ENCODE measurements at regions of chr1 and their contacts with region 1.

Region 1: DNA sequence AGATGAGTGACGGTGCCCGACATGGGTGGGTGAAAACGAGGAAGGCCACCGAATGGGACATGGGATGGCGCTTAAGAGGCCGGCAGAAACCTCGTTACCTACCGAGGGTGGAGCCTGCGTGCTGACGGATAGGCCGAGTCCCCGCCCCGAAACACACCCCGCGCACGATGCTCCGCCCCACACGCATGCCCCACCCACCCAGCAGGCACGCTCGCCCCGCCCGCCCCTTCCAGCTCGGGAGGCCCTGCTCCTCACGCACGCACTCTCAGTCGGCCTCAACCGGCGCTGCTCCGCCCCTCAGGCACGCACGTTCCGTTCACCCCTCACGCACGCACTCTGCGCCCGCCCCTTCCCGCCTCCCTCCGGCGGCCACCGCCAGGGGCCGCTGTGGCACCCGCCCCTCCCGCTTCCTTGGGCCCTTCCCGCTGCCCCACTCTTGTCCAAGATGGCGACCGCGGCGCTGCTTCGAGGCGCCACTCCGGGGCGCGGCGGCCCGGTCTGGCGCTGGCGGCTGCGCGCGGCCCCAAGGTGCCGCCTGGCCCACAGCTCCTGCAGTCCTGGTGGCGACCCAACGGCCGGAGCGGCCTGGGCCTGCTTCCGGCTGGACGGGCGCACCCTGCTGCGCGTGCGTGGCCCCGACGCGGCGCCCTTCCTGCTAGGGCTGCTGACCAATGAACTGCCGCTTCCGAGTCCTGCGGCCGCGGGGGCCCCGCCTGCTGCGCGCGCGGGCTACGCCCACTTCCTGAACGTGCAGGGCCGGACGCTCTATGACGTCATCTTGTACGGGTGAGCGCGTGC is at the start of gene IBA57:
- DNase-seq: peak; percentile 100
- ATAC-seq: peak; percentile 85
- H3K4me3 Mint-ChIP-seq: peak within 1 kb of the TSS; percentile 90
- H3K27ac Mint-ChIP-seq: peak within 1 kb of the TSS; percentile 94
- H3K4me1 Mint-ChIP-seq: peaks cover 29% of the 10 kb centered on the region
- H3K27me3 Mint-ChIP-seq: no peaks in the 10 kb centered on the region
- CTCF ChIP-seq: no peak
- total RNA-seq, gene IBA57: 10.8 and 14.5 TPM in 2 replicates

Region 2: GRCh38 chr1:227787513-227788270 is 377.9 kb before region 1 on chr1:
- CTCF ChIA-PET with region 1: no interaction called
- POLR2A ChIA-PET with region 1: interaction called, 12 read pairs
- intact Hi-C with region 1: loop called (anchors 2 kb)
- DNase-seq: peak; percentile 83
- ATAC-seq: peak; percentile 93
- H3K4me3 Mint-ChIP-seq: peak overlapping the region; percentile 86
- H3K27ac Mint-ChIP-seq: peak overlapping the region; percentile 61
- H3K4me1 Mint-ChIP-seq: peaks cover 22% of the 10 kb centered on the region
- H3K27me3 Mint-ChIP-seq: no peaks in the 10 kb centered on the region
- CTCF ChIP-seq: no peak

Region 3: DNA sequence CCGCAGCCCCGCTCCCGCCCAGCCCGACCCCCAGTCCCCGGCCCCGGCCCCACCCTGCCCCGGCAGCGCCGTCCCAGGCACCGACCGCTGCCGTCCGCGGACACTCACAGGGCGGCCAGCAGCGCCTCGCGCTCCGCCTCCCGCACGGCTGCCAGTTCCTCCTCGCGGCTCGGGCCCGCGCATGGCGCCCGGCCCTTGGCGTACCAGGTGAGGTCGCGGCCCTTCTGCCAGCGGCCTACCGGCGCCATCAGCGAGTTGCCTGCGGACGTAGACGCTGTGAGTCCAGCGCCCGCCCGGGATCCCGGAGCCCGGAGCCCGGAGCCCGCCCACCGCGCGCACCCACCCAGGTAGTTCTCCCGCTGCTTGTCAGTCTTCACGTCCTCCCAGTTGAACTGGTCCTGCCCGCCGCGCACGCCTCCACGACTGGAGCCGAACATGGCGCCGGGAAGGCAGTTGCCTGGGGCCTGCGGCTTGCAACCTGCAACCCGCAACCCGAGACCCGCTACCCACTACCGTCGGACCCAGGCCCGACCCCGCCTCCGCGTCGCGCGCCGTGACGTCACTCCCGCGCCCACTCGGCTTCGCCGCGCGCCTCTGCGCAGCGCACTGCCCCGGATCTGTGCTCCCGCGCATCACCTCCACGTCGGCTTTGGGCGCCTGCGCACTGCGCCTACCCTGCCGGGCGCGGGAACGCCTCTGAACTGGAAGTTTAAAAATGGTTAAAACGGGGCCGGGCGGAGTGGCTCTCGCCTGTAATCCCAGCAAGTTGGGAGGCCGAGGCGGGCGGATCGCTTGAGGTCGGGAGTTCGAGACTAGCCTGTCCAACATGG is 62.6 kb before region 1 on chr1 and contains the start of gene C1orf35:
- CTCF ChIA-PET with region 1: no interaction called
- POLR2A ChIA-PET with region 1: interaction called, 5 read pairs
- intact Hi-C with region 1: loop called (anchors 1 kb)
- DNase-seq: peak; percentile 90
- ATAC-seq: peak; percentile 87
- H3K4me3 Mint-ChIP-seq: peak within 1 kb of the TSS; percentile 94
- H3K27ac Mint-ChIP-seq: peak within 1 kb of the TSS; percentile 86
- H3K4me1 Mint-ChIP-seq: peaks cover 30% of the 10 kb centered on the region
- H3K27me3 Mint-ChIP-seq: no peaks in the 10 kb centered on the region
- CTCF ChIP-seq: no peak
- total RNA-seq, gene C1orf35: 11.9 and 13.3 TPM in 2 replicates

Region 4: GRCh38 chr1:228139944-228140656 is 25.5 kb before region 1 on chr1 and contains the start of gene GUK1:
- CTCF ChIA-PET with region 1: interaction called, 20 read pairs
- POLR2A ChIA-PET with region 1: interaction called, 134 read pairs
- intact Hi-C with region 1: loop called (anchors 1 kb)
- DNase-seq: peak; percentile 99
- ATAC-seq: peak; percentile 92
- H3K4me3 Mint-ChIP-seq: peak within 1 kb of the TSS; percentile 96
- H3K27ac Mint-ChIP-seq: peak within 1 kb of the TSS; percentile 99
- H3K4me1 Mint-ChIP-seq: peaks cover 71% of the 10 kb centered on the region
- H3K27me3 Mint-ChIP-seq: no peaks in the 10 kb centered on the region
- CTCF ChIP-seq: no peak
- total RNA-seq, gene GUK1: 104 and 119 TPM in 2 replicates

Region 5: GRCh38 chr1:228198977-228199590 is 33.5 kb after region 1 on chr1:
- CTCF ChIA-PET with region 1: no interaction called
- POLR2A ChIA-PET with region 1: no interaction called
- intact Hi-C with region 1: no loop called
- DNase-seq: no peak
- ATAC-seq: no peak
- H3K4me3 Mint-ChIP-seq: no peak overlapping the region
- H3K27ac Mint-ChIP-seq: no peak overlapping the region
- H3K4me1 Mint-ChIP-seq: no peaks in the 10 kb centered on the region
- H3K27me3 Mint-ChIP-seq: no peaks in the 10 kb centered on the region
- CTCF ChIP-seq: no peak

Region 6: DNA sequence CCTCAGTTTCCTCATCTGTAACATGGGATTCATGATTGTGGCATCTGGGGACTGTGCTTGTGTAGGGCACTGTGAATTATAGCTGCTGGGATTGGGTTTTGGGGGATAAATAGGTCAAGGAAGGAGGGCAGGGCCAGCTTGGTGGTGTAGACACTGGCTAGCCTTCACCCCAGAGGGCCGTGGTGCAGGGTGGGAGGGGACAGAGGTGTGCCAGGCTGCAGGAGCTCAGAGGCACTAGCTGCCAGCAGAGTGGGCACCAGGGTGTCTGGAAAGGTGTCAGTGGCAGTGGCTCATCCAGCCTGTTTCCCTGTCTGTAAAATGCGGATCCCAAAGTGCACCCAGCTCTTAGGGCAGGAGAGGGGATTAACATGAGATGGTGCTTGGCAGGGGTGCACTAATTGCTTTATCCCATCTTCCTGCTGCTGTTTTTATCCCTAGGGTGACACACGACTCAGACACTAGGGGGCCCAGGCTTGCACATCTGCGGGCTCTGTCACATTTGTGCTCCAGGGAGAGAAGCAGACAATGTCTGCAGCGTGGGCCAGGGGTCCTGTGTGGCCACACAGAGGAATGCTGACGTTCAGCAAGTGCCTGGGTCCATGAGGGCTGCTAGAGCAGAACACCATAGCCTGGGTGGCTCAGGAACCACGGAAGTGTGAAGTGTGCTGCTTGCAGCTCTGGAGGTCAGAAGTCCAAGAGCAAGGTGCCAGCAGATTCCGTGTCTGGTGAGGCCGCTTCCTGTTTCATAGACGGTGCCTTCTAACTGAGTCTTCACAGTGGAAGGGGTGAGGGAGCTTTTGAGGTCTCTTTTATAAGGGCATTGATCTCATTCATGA is 61.6 kb after region 1 on chr1:
- CTCF ChIA-PET with region 1: no interaction called
- POLR2A ChIA-PET with region 1: no interaction called
- intact Hi-C with region 1: no loop called
- DNase-seq: no peak
- ATAC-seq: no peak
- H3K4me3 Mint-ChIP-seq: no peak overlapping the region
- H3K27ac Mint-ChIP-seq: no peak overlapping the region
- H3K4me1 Mint-ChIP-seq: no peaks in the 10 kb centered on the region
- H3K27me3 Mint-ChIP-seq: no peaks in the 10 kb centered on the region
- CTCF ChIP-seq: no peak

Region 7: GRCh38 chr1:228457396-228458176 is 292.0 kb after region 1 on chr1:
- CTCF ChIA-PET with region 1: no interaction called
- POLR2A ChIA-PET with region 1: interaction called, 4 read pairs
- intact Hi-C with region 1: loop called (anchors 2 kb)
- DNase-seq: peak; percentile 53
- ATAC-seq: peak; percentile 85
- H3K4me3 Mint-ChIP-seq: peak overlapping the region; percentile 89
- H3K27ac Mint-ChIP-seq: peak overlapping the region; percentile 89
- H3K4me1 Mint-ChIP-seq: peaks cover 25% of the 10 kb centered on the region
- H3K27me3 Mint-ChIP-seq: peaks cover 26% of the 10 kb centered on the region
- CTCF ChIP-seq: no peak

Region 8: GRCh38 chr1:229079016-229079595 is 913.5 kb after region 1 on chr1:
- CTCF ChIA-PET with region 1: no interaction called
- POLR2A ChIA-PET with region 1: no interaction called
- intact Hi-C with region 1: no loop called
- DNase-seq: no peak
- ATAC-seq: no peak
- H3K4me3 Mint-ChIP-seq: no peak overlapping the region
- H3K27ac Mint-ChIP-seq: no peak overlapping the region
- H3K4me1 Mint-ChIP-seq: no peaks in the 10 kb centered on the region
- H3K27me3 Mint-ChIP-seq: peaks cover 8% of the 10 kb centered on the region
- CTCF ChIP-seq: no peak

Measured in activated B cell treated with CpG ODN at 0.5 μM for 24 hours (primary cell).